Tibial artery (tissue), 4 donors: ENCODE measurements at regions of chr16 and their contacts with region 1.

Region 1: DNA sequence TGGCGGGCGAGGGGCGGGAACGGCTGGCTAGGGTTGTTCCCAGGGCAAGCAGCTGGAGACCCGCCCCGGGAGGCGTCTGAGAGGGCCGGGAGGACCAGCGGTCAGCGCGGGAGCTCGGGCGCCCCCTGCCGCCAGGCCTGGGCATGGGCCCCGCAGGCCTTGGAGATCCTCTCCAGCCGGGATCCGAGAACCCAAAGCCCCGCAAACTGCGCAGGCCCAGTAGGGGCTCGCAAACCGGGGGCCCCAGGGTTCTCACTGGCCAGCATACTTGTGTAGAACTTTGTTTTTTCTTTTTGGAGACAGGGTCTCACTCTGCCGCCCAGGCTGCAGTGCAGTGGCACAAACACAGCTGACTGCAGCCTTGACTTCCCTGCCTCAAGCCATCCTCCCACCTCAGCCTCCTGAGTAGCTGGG is 20.8 kb upstream of the ZNF423 start:
- DNase-seq: peak; percentile 45 to 78
- H3K4me3 ChIP-seq: peak overlapping the region; percentile 22 to 35
- H3K27ac ChIP-seq: no peak overlapping the region
- H3K4me1 ChIP-seq: peaks cover 0 to 11% (median 7%) of the 10 kb centered on the region in 4 donors
- H3K27me3 ChIP-seq: peaks cover 0 to 30% of the 10 kb centered on the region in 2 donors
- CTCF ChIP-seq: peak; percentile 76 to 95

Region 2: DNA sequence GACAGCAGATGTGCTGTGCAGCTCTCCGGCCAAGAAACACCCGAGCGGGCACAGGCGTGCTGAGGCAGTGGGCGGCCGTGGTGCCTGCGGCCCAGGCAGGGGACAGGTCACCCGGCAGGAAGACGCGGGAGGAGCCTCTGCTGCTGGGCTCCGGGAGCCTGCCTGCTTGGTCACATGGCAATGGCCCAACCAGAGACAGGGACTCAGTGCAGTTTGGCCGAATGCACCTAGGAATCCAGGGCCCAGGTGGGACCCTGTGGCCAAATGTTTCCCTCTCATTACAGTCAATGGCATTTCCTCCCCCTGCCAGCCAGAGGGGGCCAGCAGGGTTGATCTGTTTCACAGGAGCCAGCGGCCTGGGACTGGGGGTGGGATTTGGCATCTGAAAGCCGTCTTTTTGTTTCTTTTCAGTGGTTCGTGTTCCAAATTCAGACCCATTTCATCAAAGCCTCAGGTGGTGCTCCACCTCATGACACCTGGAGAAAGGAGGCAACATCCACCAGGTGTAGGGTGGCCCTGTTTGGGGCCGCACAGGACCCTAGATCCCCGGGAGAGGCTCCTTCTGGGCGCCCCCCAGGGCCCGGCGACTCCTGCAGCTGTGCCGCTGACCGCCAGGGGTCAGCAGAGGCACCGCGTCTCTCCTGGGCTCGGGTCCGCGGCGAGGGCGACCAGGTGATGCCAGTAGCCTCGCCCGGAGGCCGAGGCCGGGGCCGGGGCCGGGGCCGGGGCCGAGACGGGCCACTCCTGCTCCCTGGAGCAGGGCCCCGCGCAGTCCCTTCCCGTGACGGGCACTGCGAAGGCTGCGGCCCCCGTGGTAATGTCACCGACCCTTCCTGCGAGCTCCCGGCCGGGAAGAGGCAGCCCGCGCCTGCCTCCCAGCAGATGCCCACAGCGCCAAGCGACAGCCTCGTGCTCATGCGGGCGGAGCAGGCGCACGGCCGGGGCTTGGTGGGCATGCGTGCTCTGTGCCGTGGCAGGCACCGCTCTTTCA is 384.7 kb before region 1 on chr16:
- intact Hi-C with region 1: loop called (anchors 2 kb)
- DNase-seq: peak; percentile 44 to 69
- H3K4me3 ChIP-seq: peak overlapping the region; percentile 39 to 42
- H3K27ac ChIP-seq: no peak overlapping the region
- H3K4me1 ChIP-seq: peaks cover 0 to 15% (median 8%) of the 10 kb centered on the region in 4 donors
- H3K27me3 ChIP-seq: no peaks in the 10 kb centered on the region
- CTCF ChIP-seq: peak; percentile 83 to 94

Region 3: DNA sequence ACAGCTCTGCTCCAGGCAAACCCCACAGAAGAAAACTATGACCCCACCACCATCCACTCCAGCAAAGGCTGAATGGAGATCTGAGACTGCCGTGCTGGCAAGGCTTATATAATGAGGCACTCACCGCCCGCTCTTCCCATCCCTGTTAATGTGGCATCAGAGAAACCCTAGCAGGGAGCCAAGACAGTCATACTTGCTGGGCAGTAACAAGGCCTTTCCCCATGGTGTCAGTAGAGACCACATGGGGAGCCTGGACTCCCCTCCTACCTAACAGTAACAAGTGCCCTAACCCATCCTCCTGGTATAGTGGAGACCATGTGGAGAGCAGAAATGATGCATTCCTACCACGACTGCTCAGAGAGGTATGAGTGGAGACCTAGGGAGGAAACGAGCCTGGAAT is 267.9 kb before region 1 on chr16:
- intact Hi-C with region 1: loop called (anchors 10 kb)
- DNase-seq: peak in 1 of 2 donors; percentile 66
- H3K4me3 ChIP-seq: no peak overlapping the region
- H3K27ac ChIP-seq: no peak overlapping the region
- H3K4me1 ChIP-seq: peaks cover 0 to 5% (median 0%) of the 10 kb centered on the region in 4 donors
- H3K27me3 ChIP-seq: no peaks in the 10 kb centered on the region
- CTCF ChIP-seq: peak; percentile 40 to 54

Region 4: GRCh38 chr16:49833085-49833484 is 43.6 kb before region 1 on chr16:
- intact Hi-C with region 1: no loop called
- DNase-seq: peak; percentile 77 to 88
- H3K4me3 ChIP-seq: peak overlapping the region in 1 of 2 donors; percentile 12
- H3K27ac ChIP-seq: peak overlapping the region; percentile 80 to 83
- H3K4me1 ChIP-seq: peaks cover 13 to 89% (median 71%) of the 10 kb centered on the region in 4 donors
- H3K27me3 ChIP-seq: no peaks in the 10 kb centered on the region
- CTCF ChIP-seq: no peak